Activated T-helper 1 cell treated with anti-CD3 and anti-CD28 coated beads, Interleukin-12 subunit alpha, Interleukin-12 subunit beta, Interleukin-2, Interleukin-4 antibody, amounts not matched to agents 30 ng/mL and 10 ng/mL and 1 ng/mL, durations not matched to agents 14 hours and 24 hours and 36 hours (primary cell): ENCODE measurements at regions of chr1 and their contacts with region 1.

Region 1: DNA sequence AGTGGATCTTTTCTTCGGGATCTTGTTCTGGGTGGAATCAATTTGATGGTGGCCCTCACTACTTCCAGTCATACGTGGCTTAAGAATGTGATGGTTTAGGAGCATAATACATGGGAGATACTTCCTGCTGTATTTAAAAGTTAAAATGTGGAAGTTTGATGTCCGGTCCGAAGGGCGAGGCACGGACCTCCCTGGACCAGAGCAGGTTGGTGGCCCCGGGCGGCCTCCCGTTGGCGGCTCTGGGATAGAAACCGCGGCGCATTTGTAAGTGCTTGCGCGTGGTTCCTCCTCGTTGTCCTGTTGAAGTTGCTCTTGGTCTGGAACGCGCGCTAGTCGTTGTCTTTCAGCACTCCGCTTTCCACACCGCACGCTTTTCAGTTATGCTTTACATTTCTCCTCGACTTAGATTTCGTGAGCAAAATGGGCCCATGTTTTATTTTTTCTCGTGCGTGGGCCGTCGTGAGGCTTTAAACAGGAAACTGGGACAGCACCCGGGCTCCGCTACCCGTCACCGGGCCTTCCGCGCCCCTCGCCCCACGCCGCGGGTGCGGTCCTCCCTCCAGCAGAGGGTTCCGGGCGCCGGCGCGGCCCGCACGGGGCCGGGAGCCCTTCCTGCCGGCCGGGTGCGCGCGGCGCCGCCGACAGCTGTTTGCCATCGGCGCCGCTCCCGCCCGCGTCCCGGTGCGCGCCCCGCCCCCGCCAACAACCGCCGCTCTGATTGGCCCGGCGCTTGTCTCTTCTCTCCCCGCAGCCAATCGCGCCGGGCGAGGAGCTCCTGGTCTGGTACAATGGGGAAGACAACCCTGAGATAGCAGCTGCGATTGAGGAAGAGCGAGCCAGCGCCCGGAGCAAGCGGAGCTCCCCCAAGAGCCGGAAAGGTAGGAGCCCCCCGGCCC is 48.9 kb downstream of the PRDM2 start:
- DNase-seq: peak; percentile 94
- H3K4me3 Mint-ChIP-seq: peak overlapping the region; percentile 87
- H3K27ac Mint-ChIP-seq: peak overlapping the region; percentile 96
- H3K4me1 Mint-ChIP-seq: peaks cover 54% of the 10 kb centered on the region
- H3K27me3 Mint-ChIP-seq: peaks cover 3% of the 10 kb centered on the region

Region 2: GRCh38 chr1:13667691-13668090 is 81.2 kb before region 1 on chr1:
- intact Hi-C with region 1: loop called (anchors 5 kb)
- DNase-seq: no peak
- H3K4me3 Mint-ChIP-seq: no peak overlapping the region
- H3K27ac Mint-ChIP-seq: no peak overlapping the region
- H3K4me1 Mint-ChIP-seq: peaks cover 6% of the 10 kb centered on the region
- H3K27me3 Mint-ChIP-seq: peaks cover 3% of the 10 kb centered on the region

Region 3: GRCh38 chr1:13699936-13700520 is 48.8 kb before region 1 on chr1 and contains the start of gene PRDM2:
- intact Hi-C with region 1: loop called (anchors 1 kb)
- DNase-seq: peak; percentile 57
- H3K4me3 Mint-ChIP-seq: peak within 1 kb of the TSS; percentile 100
- H3K27ac Mint-ChIP-seq: peak within 1 kb of the TSS; percentile 99
- H3K4me1 Mint-ChIP-seq: peaks cover 45% of the 10 kb centered on the region
- H3K27me3 Mint-ChIP-seq: peaks cover 6% of the 10 kb centered on the region
- total RNA-seq, gene PRDM2: 48.5 and 50.4 TPM in 2 replicates

Region 4: DNA sequence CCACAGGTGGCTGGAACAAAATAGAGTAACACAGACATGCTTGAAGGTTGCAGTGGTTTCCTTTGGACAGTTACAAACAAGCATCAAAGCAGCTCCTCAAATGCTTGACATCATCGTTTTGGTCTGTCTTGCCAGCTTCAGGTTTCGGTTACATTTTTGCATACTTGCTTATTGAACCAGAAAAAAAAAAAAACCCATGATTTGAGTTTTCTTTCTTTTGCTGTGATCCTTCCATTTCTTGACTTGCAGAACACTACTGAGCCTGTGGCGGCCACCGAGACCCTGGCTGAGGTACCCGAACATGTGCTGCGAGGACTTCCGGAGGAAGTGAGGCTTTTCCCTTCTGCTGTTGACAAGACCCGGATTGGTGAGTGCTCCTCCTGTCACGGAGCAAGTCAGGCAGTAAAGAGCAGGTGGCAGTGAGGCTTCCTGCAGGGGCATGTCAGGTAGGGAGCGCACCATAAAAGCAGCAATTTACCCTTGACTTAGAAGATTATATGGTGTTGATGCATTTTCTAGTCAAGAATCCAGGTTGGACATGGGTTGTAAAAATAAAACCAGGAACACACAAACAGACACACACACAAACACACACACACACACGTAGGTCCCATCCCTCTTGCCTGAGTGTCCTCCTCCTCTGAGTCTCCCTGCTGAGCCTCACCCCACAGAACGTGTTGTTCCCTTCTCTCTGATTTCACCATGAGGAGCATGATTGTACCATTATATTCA is 17.9 kb before region 1 on chr1:
- intact Hi-C with region 1: loop called (anchors 1 kb)
- DNase-seq: peak; percentile 83
- H3K4me3 Mint-ChIP-seq: peak overlapping the region; percentile 84
- H3K27ac Mint-ChIP-seq: peak overlapping the region; percentile 98
- H3K4me1 Mint-ChIP-seq: peaks cover 61% of the 10 kb centered on the region
- H3K27me3 Mint-ChIP-seq: no peaks in the 10 kb centered on the region

Region 5: DNA sequence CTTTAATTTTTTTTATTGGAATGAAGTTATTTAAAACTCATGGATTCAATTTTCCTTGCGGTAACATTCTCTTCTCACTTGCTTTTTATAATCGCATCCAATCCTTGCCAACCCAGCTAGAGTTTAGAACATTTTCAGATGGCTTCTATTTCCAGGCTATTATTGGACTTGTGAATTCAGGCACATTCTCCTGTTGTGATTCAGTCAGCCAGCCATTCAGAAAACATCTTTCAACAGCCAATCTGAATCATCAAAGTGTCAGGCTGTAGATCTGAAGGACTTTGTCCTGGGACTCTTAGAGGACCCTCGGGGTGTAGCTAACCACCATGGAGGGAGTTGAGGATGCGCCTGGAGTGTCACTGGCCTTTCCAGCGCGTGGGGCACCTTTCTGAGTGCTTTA is 43.6 kb after region 1 on chr1:
- intact Hi-C with region 1: no loop called
- DNase-seq: no peak
- H3K4me3 Mint-ChIP-seq: no peak overlapping the region
- H3K27ac Mint-ChIP-seq: no peak overlapping the region
- H3K4me1 Mint-ChIP-seq: peaks cover 35% of the 10 kb centered on the region
- H3K27me3 Mint-ChIP-seq: no peaks in the 10 kb centered on the region